Activated CD4-positive, alpha-beta memory T cell treated with anti-CD3 and anti-CD28 coated beads for 36 hours (primary cell): ENCODE measurements at regions of chr5 and their contacts with region 1.

Region 1: GRCh38 chr5:122192497-122193496 is 63.5 kb downstream of the ZNF474 start:
- DNase-seq: no peak
- H3K4me3 Mint-ChIP-seq: no peak overlapping the region
- H3K27ac Mint-ChIP-seq: no peak overlapping the region
- H3K4me1 Mint-ChIP-seq: no peaks in the 10 kb centered on the region
- H3K27me3 Mint-ChIP-seq: peaks cover 5% of the 10 kb centered on the region

Region 2: GRCh38 chr5:122415030-122415800 is 222.4 kb after region 1 on chr5:
- CTCF ChIA-PET with region 1: interaction called, 3 read pairs
- POLR2A ChIA-PET with region 1: no interaction called
- intact Hi-C with region 1: loop called (anchors 1 kb)
- DNase-seq: peak; percentile 16
- H3K4me3 Mint-ChIP-seq: no peak overlapping the region
- H3K27ac Mint-ChIP-seq: no peak overlapping the region
- H3K4me1 Mint-ChIP-seq: no peaks in the 10 kb centered on the region
- H3K27me3 Mint-ChIP-seq: no peaks in the 10 kb centered on the region

Region 3: GRCh38 chr5:123371575-123372179 is 1178.9 kb after region 1 on chr5:
- CTCF ChIA-PET with region 1: no interaction called
- POLR2A ChIA-PET with region 1: no interaction called
- intact Hi-C with region 1: loop called (anchors 5 kb)
- DNase-seq: peak; percentile 34
- H3K4me3 Mint-ChIP-seq: no peak overlapping the region
- H3K27ac Mint-ChIP-seq: no peak overlapping the region
- H3K4me1 Mint-ChIP-seq: no peaks in the 10 kb centered on the region
- H3K27me3 Mint-ChIP-seq: no peaks in the 10 kb centered on the region